ENCODE measurements at regions of chr2 and their contacts with region 1.

Region 1: GRCh38 chr2:15577071-15577735 is 14.5 kb upstream of the DDX1 start:
- DNase-seq: peak; percentile 74 to 85 (median 77)
- H3K4me3 ChIP-seq: no peak overlapping the region
- H3K4me3 Mint-ChIP-seq: no peak overlapping the region
- H3K27ac ChIP-seq: no peak overlapping the region
- H3K27ac Mint-ChIP-seq: no peak overlapping the region
- H3K4me1 ChIP-seq: no peaks in the 10 kb centered on the region
- H3K4me1 Mint-ChIP-seq: no peaks in the 10 kb centered on the region
- H3K27me3 ChIP-seq: no peaks in the 10 kb centered on the region
- H3K27me3 Mint-ChIP-seq: peaks cover 0 to 1% of the 10 kb centered on the region in 2 donors

Region 2: DNA sequence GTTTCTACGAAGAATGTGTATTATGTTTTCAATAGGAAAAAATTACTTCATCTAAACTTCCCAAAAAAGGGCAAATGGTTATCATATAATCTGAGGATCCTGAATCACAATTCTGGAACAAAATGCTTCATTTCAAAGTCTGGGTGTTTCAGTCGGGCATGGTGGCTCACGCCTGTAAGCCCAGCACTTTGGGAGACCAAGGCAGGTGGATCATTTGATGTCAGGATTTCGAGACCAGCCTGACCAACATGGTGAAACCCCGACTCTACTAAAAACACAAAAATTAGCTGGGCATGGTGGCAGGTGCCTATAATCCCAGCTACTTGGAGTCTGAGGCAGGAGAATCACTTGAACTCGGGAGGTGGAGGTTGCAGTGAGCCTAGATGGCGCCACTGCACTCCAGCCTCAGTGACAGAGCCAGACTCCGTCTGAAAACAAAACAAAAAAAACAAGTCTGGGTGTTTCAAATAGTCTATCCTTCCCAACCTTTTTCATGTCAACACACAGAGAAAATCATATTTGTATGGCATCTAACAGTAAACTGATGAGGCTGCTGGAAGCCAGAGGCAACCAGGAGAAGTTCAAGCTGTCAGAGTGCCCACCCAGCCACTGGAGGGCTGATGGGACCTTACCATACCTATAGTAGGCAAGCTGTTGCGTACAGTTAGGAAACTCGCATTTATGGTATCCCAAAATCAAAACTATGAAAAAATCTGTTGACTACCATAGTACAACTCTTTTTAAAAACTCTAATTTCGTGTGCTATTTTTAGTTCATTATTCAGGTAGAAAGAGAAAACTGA is 30.7 kb before region 1 on chr2:
- CTCF ChIA-PET with region 1: interaction called, 25 read pairs
- POLR2A ChIA-PET with region 1: no interaction called
- intact Hi-C with region 1: no loop called
- DNase-seq: no peak
- H3K4me3 ChIP-seq: no peak overlapping the region
- H3K4me3 Mint-ChIP-seq: peak overlapping the region in 1 of 8 donors; percentile 31
- H3K27ac ChIP-seq: no peak overlapping the region
- H3K27ac Mint-ChIP-seq: no peak overlapping the region
- H3K4me1 ChIP-seq: no peaks in the 10 kb centered on the region
- H3K4me1 Mint-ChIP-seq: peaks cover 0 to 6% (median 4%) of the 10 kb centered on the region in 4 donors
- H3K27me3 ChIP-seq: no peaks in the 10 kb centered on the region
- H3K27me3 Mint-ChIP-seq: no peaks in the 10 kb centered on the region

Region 3: DNA sequence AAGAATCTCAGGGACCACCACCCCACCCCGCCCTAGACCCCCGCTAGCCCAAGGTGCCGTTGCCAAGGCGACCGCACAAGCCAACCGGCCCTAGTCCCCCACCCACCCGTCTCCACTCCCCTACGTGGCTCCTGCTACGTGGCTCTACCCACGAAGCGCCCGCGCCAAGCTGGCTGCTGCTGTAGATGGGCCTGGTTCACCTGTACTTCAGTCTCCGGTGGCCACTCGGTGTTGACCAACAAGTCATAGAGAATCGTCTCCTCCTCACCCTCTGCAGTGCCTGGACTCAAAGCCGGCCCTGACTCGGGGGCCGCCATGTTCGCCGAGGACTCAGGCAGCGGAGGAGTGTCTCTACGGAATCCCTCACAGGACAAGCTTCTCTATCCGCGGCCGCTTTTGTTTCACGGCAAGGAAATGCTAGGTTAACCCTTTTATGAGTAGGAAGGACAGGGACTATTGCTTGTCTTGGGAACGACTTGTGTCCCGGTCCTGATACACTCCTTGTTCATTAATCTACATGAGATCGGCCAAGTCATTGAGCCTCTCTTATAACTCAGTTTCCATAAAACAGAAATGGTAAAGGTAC is 16.1 kb before region 1 on chr2 and contains the start of gene NBAS:
- CTCF ChIA-PET with region 1: interaction called, 29 read pairs
- POLR2A ChIA-PET with region 1: interaction called, 8 read pairs
- intact Hi-C with region 1: loop called (anchors 1 kb)
- DNase-seq: peak; percentile 74 to 78 (median 76)
- H3K4me3 ChIP-seq: peak within 1 kb of the TSS; percentile 50 to 53
- H3K4me3 Mint-ChIP-seq: peak within 1 kb of the TSS; percentile 99 to 100 (median 100)
- H3K27ac ChIP-seq: peak within 1 kb of the TSS; percentile 56
- H3K27ac Mint-ChIP-seq: peak within 1 kb of the TSS; percentile 84 to 99 (median 98)
- H3K4me1 ChIP-seq: peaks cover 25% of the 10 kb centered on the region
- H3K4me1 Mint-ChIP-seq: peaks cover 30 to 46% (median 37%) of the 10 kb centered on the region in 4 donors
- H3K27me3 ChIP-seq: no peaks in the 10 kb centered on the region
- H3K27me3 Mint-ChIP-seq: no peaks in the 10 kb centered on the region
- total RNA-seq, gene NBAS: 34.9 to 37.0 TPM

Region 4: GRCh38 chr2:15591692-15592463 is 14.7 kb after region 1 on chr2 and contains the start of gene DDX1:
- CTCF ChIA-PET with region 1: interaction called, 61 read pairs
- POLR2A ChIA-PET with region 1: interaction called, 4 read pairs
- intact Hi-C with region 1: no loop called
- DNase-seq: peak; percentile 83 to 86 (median 84)
- H3K4me3 ChIP-seq: peak within 1 kb of the TSS; percentile 48 to 71
- H3K4me3 Mint-ChIP-seq: peak within 1 kb of the TSS; percentile 86 to 96 (median 92)
- H3K27ac ChIP-seq: peak within 1 kb of the TSS; percentile 76
- H3K27ac Mint-ChIP-seq: peak within 1 kb of the TSS; percentile 87 to 97 (median 95)
- H3K4me1 ChIP-seq: peaks cover 31% of the 10 kb centered on the region
- H3K4me1 Mint-ChIP-seq: peaks cover 27 to 47% (median 34%) of the 10 kb centered on the region in 4 donors
- H3K27me3 ChIP-seq: no peaks in the 10 kb centered on the region
- H3K27me3 Mint-ChIP-seq: no peaks in the 10 kb centered on the region
- total RNA-seq, gene DDX1: 58.3 to 61.7 TPM